HCT116 (cell line): ENCODE measurements at regions of chrX and their contacts with region 1.

Region 1: DNA sequence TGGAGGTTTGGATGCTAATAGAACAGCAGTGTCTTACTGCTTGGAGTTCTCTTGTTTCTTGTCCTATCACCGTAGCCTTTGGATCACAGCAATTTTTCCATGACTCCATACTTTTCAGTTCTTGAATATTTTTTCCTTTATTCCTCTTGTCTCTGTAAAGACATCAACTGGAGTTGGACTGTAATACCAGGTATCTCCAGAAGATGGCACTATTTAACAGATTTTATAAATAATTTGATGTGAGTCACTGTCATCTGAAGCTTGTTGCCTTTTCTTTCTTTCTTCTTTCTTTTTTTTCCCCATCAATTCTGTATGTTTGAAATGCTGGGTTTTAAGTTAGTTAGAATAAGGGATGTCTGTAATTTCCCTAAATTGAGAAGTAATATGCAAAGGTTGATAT is 24.1 kb downstream of the HPRT1 start:
- DNase-seq: peak; percentile 36
- ATAC-seq: peak; percentile 25; the same call in 1 of the 2 replicates
- H3K4me3 ChIP-seq: no peak overlapping the region
- H3K27ac ChIP-seq: no peak overlapping the region
- H3K4me1 ChIP-seq: no peaks in the 10 kb centered on the region
- H3K27me3 ChIP-seq: no peaks in the 10 kb centered on the region
- CTCF ChIP-seq: peak; percentile 26 to 57 (median 43); a peak in 4 of 6 replicates
- POLR2A ChIP-seq: no peak
- RAD21 ChIP-seq: peak; percentile 57

Region 2: DNA sequence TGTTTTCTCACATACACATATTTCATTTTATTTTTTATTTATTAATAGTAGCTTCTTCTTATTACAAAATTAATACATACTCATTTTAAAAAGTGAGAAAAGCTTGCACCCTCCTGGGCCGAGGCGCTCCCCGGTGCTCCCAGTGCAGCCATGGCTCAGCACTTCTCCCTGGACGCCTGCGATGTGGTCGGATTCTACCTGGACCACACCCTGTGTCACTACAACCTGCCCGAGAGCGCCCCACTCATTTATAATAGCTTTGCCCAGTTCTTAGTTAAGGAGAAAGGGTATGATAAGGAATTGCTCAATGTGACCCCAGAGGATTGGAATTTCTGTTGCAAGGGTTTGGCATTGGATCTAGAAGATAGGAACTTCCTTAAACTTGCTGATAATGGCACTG is 211.9 kb before region 1 on chrX:
- CTCF ChIA-PET with region 1: no interaction called
- POLR2A ChIA-PET with region 1: no interaction called
- RAD21 ChIA-PET with region 1: no interaction called
- intact Hi-C with region 1: no loop called
- DNase-seq: no peak
- ATAC-seq: no peak
- H3K4me3 ChIP-seq: no peak overlapping the region
- H3K27ac ChIP-seq: no peak overlapping the region
- H3K4me1 ChIP-seq: no peaks in the 10 kb centered on the region
- H3K27me3 ChIP-seq: no peaks in the 10 kb centered on the region
- CTCF ChIP-seq: no peak
- POLR2A ChIP-seq: no peak
- RAD21 ChIP-seq: no peak

Region 3: GRCh38 chrX:134753718-134754008 is 269.6 kb after region 1 on chrX:
- CTCF ChIA-PET with region 1: interaction called, 4 read pairs
- POLR2A ChIA-PET with region 1: no interaction called
- RAD21 ChIA-PET with region 1: no interaction called
- intact Hi-C with region 1: loop called (anchors 2 kb)
- DNase-seq: no peak
- ATAC-seq: no peak
- H3K4me3 ChIP-seq: no peak overlapping the region
- H3K27ac ChIP-seq: no peak overlapping the region
- H3K4me1 ChIP-seq: no peaks in the 10 kb centered on the region
- H3K27me3 ChIP-seq: no peaks in the 10 kb centered on the region
- CTCF ChIP-seq: peak in 2 of 3 experiments; percentile 2 to 37; a peak in 2 of 6 replicates
- POLR2A ChIP-seq: no peak
- RAD21 ChIP-seq: peak; percentile 62

Region 4: GRCh38 chrX:134999469-134999868 is 515.4 kb after region 1 on chrX:
- CTCF ChIA-PET with region 1: interaction called, 3 read pairs
- POLR2A ChIA-PET with region 1: no interaction called
- RAD21 ChIA-PET with region 1: no interaction called
- intact Hi-C with region 1: loop called (anchors 5 kb)
- DNase-seq: peak; percentile 51
- ATAC-seq: peak; percentile 49
- H3K4me3 ChIP-seq: no peak overlapping the region
- H3K27ac ChIP-seq: 0 out of 2 replicates have a peak overlapping the region, but pooled peaks have one; percentile 30
- H3K4me1 ChIP-seq: peaks cover 21 to 63% of the 10 kb centered on the region in 2 experiments
- H3K27me3 ChIP-seq: no peaks in the 10 kb centered on the region
- CTCF ChIP-seq: peak; percentile 30 to 56 (median 53); a peak in 4 of 6 replicates
- POLR2A ChIP-seq: no peak
- RAD21 ChIP-seq: peak; percentile 85